Endothelial cell of umbilical vein (primary cell): ENCODE measurements at regions of chr1 and their contacts with region 1.

Region 1: GRCh38 chr1:32394141-32394889 is at the start of gene BSDC1:
- DNase-seq: peak; percentile 99
- H3K4me3 ChIP-seq: peak within 1 kb of the TSS; percentile 56 to 76 (median 65)
- H3K27ac ChIP-seq: peak within 1 kb of the TSS; percentile 60
- H3K4me1 ChIP-seq: peaks cover 15% of the 10 kb centered on the region
- H3K27me3 ChIP-seq: no peaks in the 10 kb centered on the region
- CTCF ChIP-seq: no peak
- POLR2A ChIP-seq: no peak
- total RNA-seq, gene BSDC1: 64.6 and 64.8 TPM in 2 replicates

Region 2: GRCh38 chr1:31306278-31306677 is 1088.0 kb before region 1 on chr1:
- CTCF ChIA-PET with region 1: no interaction called
- POLR2A ChIA-PET with region 1: no interaction called
- dilution Hi-C with region 1: no loop called
- intact Hi-C with region 1: no loop called
- DNase-seq: peak; percentile 81
- H3K4me3 ChIP-seq: no peak overlapping the region
- H3K27ac ChIP-seq: peak overlapping the region; percentile 67
- H3K4me1 ChIP-seq: peaks cover 4% of the 10 kb centered on the region
- H3K27me3 ChIP-seq: no peaks in the 10 kb centered on the region
- CTCF ChIP-seq: no peak
- POLR2A ChIP-seq: no peak

Region 3: DNA sequence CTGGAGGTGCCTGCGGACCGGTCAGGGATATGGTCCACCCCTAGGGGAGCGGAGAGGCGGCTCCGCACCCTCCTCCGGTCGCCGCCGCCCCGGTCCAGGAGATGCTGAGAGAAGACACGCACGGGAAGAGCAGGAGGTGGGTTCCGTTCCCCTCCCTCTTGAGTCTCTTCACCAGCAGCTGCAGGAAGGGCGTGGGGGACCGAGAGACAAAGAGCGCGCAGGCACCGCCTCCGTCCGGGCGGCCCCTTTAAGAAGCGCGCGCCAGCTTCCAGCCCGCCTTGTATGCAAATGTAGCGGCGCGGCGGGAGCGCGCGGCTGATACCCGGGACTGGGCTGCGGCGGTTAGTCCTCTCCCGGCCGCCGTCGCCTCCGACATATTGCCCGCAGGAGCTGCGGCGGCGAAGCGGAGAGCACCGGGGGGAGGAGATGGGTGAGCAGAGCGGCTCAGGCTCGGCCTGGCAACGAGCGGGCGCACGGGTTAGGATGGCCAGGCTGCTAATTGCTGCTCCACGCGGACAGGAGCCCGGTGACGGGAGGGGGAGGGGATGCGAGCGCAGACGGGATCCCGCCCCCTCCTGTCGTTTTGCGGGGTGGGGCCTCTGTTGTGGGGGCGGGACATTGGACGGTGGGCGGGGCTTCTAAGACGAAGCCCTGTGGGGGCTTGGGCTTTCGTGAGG is 321.6 kb before region 1 on chr1 and contains the start of gene TMEM39B:
- CTCF ChIA-PET with region 1: no interaction called
- POLR2A ChIA-PET with region 1: no interaction called
- dilution Hi-C with region 1: no loop called
- intact Hi-C with region 1: loop called (anchors 1 kb)
- DNase-seq: peak; percentile 94
- H3K4me3 ChIP-seq: peak within 1 kb of the TSS; percentile 74 to 78 (median 77)
- H3K27ac ChIP-seq: peak within 1 kb of the TSS; percentile 93
- H3K4me1 ChIP-seq: peaks cover 43% of the 10 kb centered on the region
- H3K27me3 ChIP-seq: no peaks in the 10 kb centered on the region
- CTCF ChIP-seq: no peak
- POLR2A ChIP-seq: peak; percentile 76
- total RNA-seq, gene TMEM39B: 43.7 and 47.3 TPM in 2 replicates

Region 4: GRCh38 chr1:32351399-32352238 is 42.7 kb before region 1 on chr1:
- CTCF ChIA-PET with region 1: interaction called, 3 read pairs
- POLR2A ChIA-PET with region 1: interaction called, 3 read pairs
- dilution Hi-C with region 1: no loop called
- intact Hi-C with region 1: loop called (anchors 1 kb)
- DNase-seq: peak; percentile 91
- H3K4me3 ChIP-seq: peak overlapping the region; percentile 36 to 56 (median 55)
- H3K27ac ChIP-seq: peak overlapping the region; percentile 77
- H3K4me1 ChIP-seq: peaks cover 34% of the 10 kb centered on the region
- H3K27me3 ChIP-seq: no peaks in the 10 kb centered on the region
- CTCF ChIP-seq: peak in 1 of 2 donors; percentile 11
- POLR2A ChIP-seq: peak; percentile 80

Region 5: GRCh38 chr1:32538887-32539583 is 144.7 kb after region 1 on chr1 and contains the start of gene ZBTB8A:
- CTCF ChIA-PET with region 1: no interaction called
- POLR2A ChIA-PET with region 1: no interaction called
- dilution Hi-C with region 1: no loop called
- intact Hi-C with region 1: no loop called
- DNase-seq: peak; percentile 79
- H3K4me3 ChIP-seq: peak within 1 kb of the TSS; percentile 65 to 85 (median 79)
- H3K27ac ChIP-seq: peak within 1 kb of the TSS; percentile 62
- H3K4me1 ChIP-seq: peaks cover 11% of the 10 kb centered on the region
- H3K27me3 ChIP-seq: no peaks in the 10 kb centered on the region
- CTCF ChIP-seq: no peak
- POLR2A ChIP-seq: no peak
- total RNA-seq, gene ZBTB8A: 9.1 and 9.6 TPM in 2 replicates